ENCODE measurements at regions of chr5 and their contacts with region 1.

Region 1: GRCh38 chr5:52811067-52811749 is 23.5 kb downstream of the ITGA1 start:
- DNase-seq: peak; percentile 79
- H3K4me3 Mint-ChIP-seq: no peak overlapping the region
- H3K27ac Mint-ChIP-seq: no peak overlapping the region
- H3K4me1 Mint-ChIP-seq: peaks cover 13% of the 10 kb centered on the region
- H3K27me3 Mint-ChIP-seq: no peaks in the 10 kb centered on the region
- CTCF ChIP-seq: no peak

Region 2: DNA sequence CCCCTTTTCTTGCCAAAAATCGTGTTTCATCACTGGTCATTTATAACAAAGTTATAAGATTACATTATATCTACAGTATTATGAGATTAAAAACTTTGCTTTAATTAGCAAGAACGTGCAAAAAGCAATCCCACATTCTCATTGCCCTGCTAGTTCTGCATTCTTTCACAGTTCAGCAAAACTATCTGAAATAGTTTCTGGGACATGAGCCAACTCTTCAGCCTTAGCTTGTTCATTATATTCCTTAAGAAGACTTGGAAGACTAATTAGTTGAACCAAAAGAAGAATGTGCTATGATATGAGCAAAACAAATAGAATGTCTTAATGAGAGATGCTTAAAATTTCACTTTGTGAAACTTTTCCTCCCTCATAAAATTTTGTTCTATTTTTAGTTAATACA is 53.2 kb after region 1 on chr5:
- CTCF ChIA-PET with region 1: interaction called, 5 read pairs
- POLR2A ChIA-PET with region 1: no interaction called
- intact Hi-C with region 1: loop called (anchors 10 kb)
- DNase-seq: peak; percentile 53
- H3K4me3 Mint-ChIP-seq: no peak overlapping the region
- H3K27ac Mint-ChIP-seq: peak overlapping the region; percentile 27
- H3K4me1 Mint-ChIP-seq: peaks cover 28% of the 10 kb centered on the region
- H3K27me3 Mint-ChIP-seq: no peaks in the 10 kb centered on the region
- CTCF ChIP-seq: no peak